Ascending aorta (tissue), 2 donors: ENCODE measurements at regions of chr19 and their contacts with region 1.

Region 1: GRCh38 chr19:4723367-4724187 is at the start of gene DPP9:
- DNase-seq: peak; percentile 91 to 99
- H3K4me3 ChIP-seq: peak within 1 kb of the TSS; percentile 87 to 98
- H3K27ac ChIP-seq: peak within 1 kb of the TSS; percentile 89 to 93
- H3K4me1 ChIP-seq: peaks cover 6 to 15% of the 10 kb centered on the region in 2 donors
- H3K27me3 ChIP-seq: no peaks in the 10 kb centered on the region
- CTCF ChIP-seq: peak; percentile 6 to 41 (median 34)
- total RNA-seq, gene DPP9: 72.2 TPM

Region 2: GRCh38 chr19:4583961-4584669 is 139.5 kb before region 1 on chr19:
- intact Hi-C with region 1: no loop called
- DNase-seq: no peak
- H3K4me3 ChIP-seq: peak overlapping the region; percentile 33 to 36
- H3K27ac ChIP-seq: no peak overlapping the region
- H3K4me1 ChIP-seq: no peaks in the 10 kb centered on the region
- H3K27me3 ChIP-seq: peaks cover 24% of the 10 kb centered on the region
- CTCF ChIP-seq: no peak

Region 3: GRCh38 chr19:4669723-4670480 is 53.7 kb before region 1 on chr19 and contains the start of gene MYDGF:
- intact Hi-C with region 1: loop called (anchors 2 kb)
- DNase-seq: peak; percentile 50 to 94
- H3K4me3 ChIP-seq: peak within 1 kb of the TSS; percentile 86 to 94
- H3K27ac ChIP-seq: peak within 1 kb of the TSS; percentile 71 to 83
- H3K4me1 ChIP-seq: peaks cover 0 to 13% of the 10 kb centered on the region in 2 donors
- H3K27me3 ChIP-seq: no peaks in the 10 kb centered on the region
- CTCF ChIP-seq: no peak
- total RNA-seq, gene MYDGF: 49.0 TPM

Region 4: DNA sequence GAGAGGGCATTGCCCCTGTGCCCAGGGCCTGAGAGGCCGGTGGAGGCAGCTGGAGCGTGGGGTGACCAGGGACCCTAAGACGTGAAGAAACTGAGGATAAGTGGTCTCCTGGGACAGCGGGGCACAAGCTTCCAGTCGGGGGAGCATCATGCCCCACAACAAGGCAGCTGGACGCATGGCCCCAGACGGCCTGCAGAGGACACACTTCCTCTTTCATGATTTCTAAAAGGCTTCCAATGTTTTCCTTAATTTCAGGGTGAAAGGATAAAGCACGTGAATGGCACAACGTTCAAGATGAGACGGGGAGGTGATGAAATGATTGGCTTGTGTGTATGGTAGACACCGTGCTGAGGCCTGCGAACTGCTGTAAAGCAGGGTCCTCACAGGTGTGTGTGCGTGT is 33.2 kb before region 1 on chr19:
- intact Hi-C with region 1: no loop called
- DNase-seq: no peak
- H3K4me3 ChIP-seq: no peak overlapping the region
- H3K27ac ChIP-seq: no peak overlapping the region
- H3K4me1 ChIP-seq: no peaks in the 10 kb centered on the region
- H3K27me3 ChIP-seq: no peaks in the 10 kb centered on the region
- CTCF ChIP-seq: no peak

Region 5: DNA sequence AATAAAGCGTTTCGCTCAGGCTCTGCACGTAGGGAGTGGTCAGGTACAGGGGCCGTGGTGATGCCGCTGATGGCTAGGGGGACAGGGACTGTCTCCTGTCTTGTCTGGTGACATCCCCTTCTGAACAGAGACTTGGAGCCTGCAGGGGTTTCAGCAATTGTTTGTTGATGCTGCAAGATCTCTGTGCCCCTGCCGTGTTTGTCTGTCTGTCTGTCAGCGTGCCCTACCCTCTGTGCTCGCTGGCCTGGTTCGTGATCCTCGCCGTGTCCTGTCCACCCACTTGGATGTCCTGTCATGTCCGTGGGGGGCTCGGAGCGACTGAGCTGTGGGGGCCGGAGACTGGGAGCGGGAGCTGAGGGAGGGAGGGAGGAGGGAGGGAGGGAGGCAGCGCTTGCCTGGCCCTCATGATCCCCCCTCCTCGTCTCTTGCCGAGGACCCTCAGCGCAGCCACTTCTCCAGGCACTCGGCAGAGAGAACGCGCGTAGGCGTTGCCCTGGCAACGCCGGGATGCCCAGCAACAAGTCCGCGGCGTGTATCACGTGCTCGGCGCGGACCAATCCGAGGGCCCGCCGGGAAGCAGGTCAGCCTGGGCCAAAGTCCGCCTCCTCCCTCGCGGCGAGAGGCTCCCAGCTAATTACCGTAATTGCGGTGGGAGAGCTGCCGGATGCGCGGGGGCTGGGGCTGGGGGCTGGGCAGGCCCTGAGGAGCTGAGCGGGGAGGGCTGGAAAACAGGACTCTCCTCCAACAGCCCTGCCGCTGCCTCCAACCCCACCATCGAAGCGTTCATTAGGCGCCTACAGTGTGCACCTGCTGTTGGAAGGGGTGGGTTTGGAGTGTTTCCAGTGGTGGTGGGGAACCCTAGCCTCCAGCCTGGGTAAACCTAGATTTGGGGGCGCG is 36.1 kb after region 1 on chr19:
- intact Hi-C with region 1: no loop called
- DNase-seq: peak; percentile 40 to 88
- H3K4me3 ChIP-seq: peak overlapping the region; percentile 30 to 53
- H3K27ac ChIP-seq: no peak overlapping the region
- H3K4me1 ChIP-seq: peaks cover 0 to 4% of the 10 kb centered on the region in 2 donors
- H3K27me3 ChIP-seq: no peaks in the 10 kb centered on the region
- CTCF ChIP-seq: no peak

Region 6: GRCh38 chr19:4791170-4792018 is 67.8 kb after region 1 on chr19 and contains the start of gene FEM1A:
- intact Hi-C with region 1: loop called (anchors 2 kb)
- DNase-seq: peak; percentile 100
- H3K4me3 ChIP-seq: peak within 1 kb of the TSS; percentile 72 to 86
- H3K27ac ChIP-seq: peak within 1 kb of the TSS; percentile 86 to 89
- H3K4me1 ChIP-seq: peaks cover 12 to 19% of the 10 kb centered on the region in 2 donors
- H3K27me3 ChIP-seq: no peaks in the 10 kb centered on the region
- CTCF ChIP-seq: peak; percentile 96 to 98 (median 98)
- total RNA-seq, gene FEM1A: 20.2 TPM

Region 7: DNA sequence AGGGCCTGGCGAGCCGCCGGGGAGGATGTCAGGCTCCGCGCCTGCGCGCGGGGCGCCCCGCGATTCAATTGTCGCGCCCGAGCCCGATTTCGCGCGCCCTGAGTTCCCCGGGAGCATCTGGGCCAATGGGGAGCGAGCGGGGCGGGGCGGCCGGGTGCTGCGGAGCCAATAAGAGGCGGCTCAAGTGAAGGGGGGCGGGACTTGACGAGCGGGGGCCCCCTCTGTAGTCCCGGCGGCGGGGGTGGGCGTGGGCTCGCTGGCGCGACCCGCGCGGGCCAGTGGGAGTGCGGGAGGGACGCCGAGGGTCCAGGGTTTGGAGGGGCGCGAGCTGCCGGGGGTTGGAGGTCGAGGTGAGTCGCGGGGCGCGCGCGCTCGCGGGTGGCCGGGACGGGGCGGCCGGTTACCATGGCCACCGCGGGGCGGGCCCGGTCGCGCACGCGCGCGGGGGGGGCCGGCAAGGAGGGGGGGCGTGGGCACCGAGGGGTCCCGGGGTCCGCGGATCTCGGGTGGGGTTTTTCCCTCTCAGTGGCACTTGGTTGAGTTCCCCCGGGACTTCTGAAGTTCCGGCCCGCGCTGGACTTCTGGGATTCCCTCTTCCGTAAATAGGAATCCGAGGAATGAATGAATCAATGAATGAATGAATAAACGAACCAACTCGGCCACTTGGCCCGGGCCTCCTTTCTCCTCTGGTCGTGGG is 186.5 kb after region 1 on chr19:
- intact Hi-C with region 1: loop called (anchors 2 kb)
- DNase-seq: peak; percentile 71 to 94
- H3K4me3 ChIP-seq: peak overlapping the region; percentile 76 to 77
- H3K27ac ChIP-seq: no peak overlapping the region
- H3K4me1 ChIP-seq: peaks cover 18 to 22% of the 10 kb centered on the region in 2 donors
- H3K27me3 ChIP-seq: no peaks in the 10 kb centered on the region
- CTCF ChIP-seq: no peak

Region 8: GRCh38 chr19:5622463-5623396 is 899.2 kb after region 1 on chr19 and contains the starts of genes SAFB and SAFB2:
- intact Hi-C with region 1: loop called (anchors 5 kb)
- DNase-seq: peak; percentile 97 to 100
- H3K4me3 ChIP-seq: peak within 1 kb of the TSS; percentile 86 to 96
- H3K27ac ChIP-seq: peak within 1 kb of the TSS; percentile 93 to 97
- H3K4me1 ChIP-seq: peaks cover 3 to 49% of the 10 kb centered on the region in 2 donors
- H3K27me3 ChIP-seq: no peaks in the 10 kb centered on the region
- CTCF ChIP-seq: peak in 2 of 3 experiments; percentile 6 to 9
- total RNA-seq, gene SAFB: 114 TPM
- total RNA-seq, gene SAFB2: 10.7 TPM